Right ventricle myocardium inferior (tissue), 1 donor: ENCODE measurements at regions of chr9 and their contacts with region 1.

Region 1: DNA sequence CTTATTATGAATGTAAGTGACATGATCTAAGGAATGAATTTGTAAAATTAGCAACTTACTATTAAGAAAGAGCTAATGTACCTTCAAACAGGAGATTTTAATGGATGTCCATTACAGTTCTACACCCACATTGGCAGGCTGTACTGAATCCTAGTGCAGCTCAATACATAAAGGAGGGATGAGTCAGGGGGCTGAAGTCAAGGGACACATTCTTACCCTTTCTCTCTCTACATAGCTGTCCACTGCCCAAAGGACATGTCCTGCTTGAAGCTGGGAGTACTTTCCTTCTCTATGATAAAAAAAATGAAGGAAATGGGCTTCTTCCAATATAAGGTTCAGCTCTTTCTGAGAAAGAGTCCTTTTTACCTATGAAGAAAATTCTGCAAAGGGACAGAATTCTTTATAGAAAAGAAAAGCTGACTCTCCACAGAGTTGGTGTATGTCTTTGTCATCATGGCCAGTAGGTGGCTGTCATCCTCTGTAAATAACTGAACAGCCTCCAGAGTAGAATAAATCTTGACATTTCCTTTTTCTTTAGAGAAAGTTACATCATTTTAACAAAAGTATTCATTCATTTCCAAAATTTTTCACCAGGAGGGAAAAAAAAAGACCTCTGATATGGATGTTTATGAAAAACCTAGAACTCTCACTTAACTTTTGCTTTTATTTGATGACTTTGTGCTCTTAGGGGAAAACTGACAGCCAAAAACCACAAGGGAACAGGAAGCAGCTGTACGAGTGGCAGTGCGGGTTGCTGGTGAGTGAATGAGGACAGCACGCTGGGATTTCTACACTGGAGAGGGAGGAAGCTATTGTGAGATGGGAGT is 13.1 kb upstream of the IFNA14 start:
- DNase-seq: no peak
- ATAC-seq: peak; percentile 72

Region 2: DNA sequence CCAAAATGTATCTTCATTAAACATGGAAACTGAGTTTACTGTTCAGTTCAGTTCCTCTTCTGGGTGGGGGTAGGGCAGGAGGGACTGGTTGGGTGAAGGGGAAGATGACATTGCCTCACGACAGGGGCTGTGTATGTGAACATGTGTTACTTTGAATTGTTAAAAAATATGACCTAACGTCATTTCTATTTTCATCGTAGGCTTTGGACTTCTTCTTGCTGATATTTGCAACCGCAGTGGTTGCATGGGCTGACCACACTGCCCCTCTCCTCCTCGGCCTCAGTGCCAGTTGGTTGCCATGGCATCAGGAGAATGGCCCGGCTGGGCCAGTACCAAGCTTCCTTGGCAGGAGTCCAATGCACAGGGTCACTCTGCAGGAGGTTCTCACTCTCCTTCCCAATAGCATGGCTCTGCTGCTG is 263.0 kb before region 1 on chr9:
- intact Hi-C with region 1: no loop called
- DNase-seq: peak; percentile 83
- ATAC-seq: peak; percentile 76

Region 3: GRCh38 chr9:21210311-21210710 is 42.6 kb before region 1 on chr9:
- intact Hi-C with region 1: no loop called
- DNase-seq: no peak
- ATAC-seq: no peak

Region 4: GRCh38 chr9:21789541-21790037 is 536.7 kb after region 1 on chr9:
- intact Hi-C with region 1: loop called (anchors 5 kb)
- DNase-seq: no peak
- ATAC-seq: peak; percentile 82